CD4-positive, alpha-beta T cell (primary cell): ENCODE measurements at regions of chr9 and their contacts with region 1.

Region 1: GRCh38 chr9:33340186-33340585 is 49.9 kb downstream of the NFX1 start:
- DNase-seq: no peak
- ATAC-seq: no peak
- H3K4me3 ChIP-seq: no peak overlapping the region
- H3K4me3 Mint-ChIP-seq: no peak overlapping the region
- H3K27ac ChIP-seq: no peak overlapping the region
- H3K27ac Mint-ChIP-seq: no peak overlapping the region
- H3K4me1 ChIP-seq: no peaks in the 10 kb centered on the region
- H3K4me1 Mint-ChIP-seq: no peaks in the 10 kb centered on the region
- H3K27me3 ChIP-seq: no peaks in the 10 kb centered on the region
- H3K27me3 Mint-ChIP-seq: no peaks in the 10 kb centered on the region
- CTCF ChIP-seq: no peak

Region 2: DNA sequence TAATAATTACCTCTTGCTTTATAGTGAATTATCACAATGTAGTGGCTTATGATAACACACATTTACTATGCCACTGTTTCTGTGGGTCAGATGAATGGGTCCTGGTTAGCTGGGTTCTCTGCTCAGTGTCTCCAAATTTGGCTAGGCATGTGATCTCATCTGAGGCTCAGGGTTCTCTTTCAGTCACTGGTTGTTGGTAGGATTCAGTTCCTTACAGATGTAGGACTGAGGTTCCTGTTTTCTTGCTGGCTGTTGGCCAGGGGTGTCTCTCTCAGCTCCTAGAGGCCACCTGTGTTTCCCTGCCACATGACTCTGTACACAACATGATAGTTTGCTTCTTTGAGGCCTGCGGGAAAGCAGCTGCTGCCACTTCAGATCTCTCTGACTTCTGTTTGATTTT is 42.8 kb before region 1 on chr9:
- CTCF ChIA-PET with region 1: no interaction called
- POLR2A ChIA-PET with region 1: no interaction called
- intact Hi-C with region 1: loop called in 1 of 2 experiments (anchors 5 kb)
- DNase-seq: peak in 4 of 14 experiments; percentile 8 to 53 (median 36)
- ATAC-seq: peak; percentile 75
- H3K4me3 ChIP-seq: no peak overlapping the region
- H3K4me3 Mint-ChIP-seq: peak overlapping the region; percentile 35
- H3K27ac ChIP-seq: no peak overlapping the region
- H3K27ac Mint-ChIP-seq: peak overlapping the region; percentile 51
- H3K4me1 ChIP-seq: peaks cover 44% of the 10 kb centered on the region
- H3K4me1 Mint-ChIP-seq: peaks cover 81% of the 10 kb centered on the region
- H3K27me3 ChIP-seq: no peaks in the 10 kb centered on the region
- H3K27me3 Mint-ChIP-seq: no peaks in the 10 kb centered on the region
- CTCF ChIP-seq: no peak

Region 3: DNA sequence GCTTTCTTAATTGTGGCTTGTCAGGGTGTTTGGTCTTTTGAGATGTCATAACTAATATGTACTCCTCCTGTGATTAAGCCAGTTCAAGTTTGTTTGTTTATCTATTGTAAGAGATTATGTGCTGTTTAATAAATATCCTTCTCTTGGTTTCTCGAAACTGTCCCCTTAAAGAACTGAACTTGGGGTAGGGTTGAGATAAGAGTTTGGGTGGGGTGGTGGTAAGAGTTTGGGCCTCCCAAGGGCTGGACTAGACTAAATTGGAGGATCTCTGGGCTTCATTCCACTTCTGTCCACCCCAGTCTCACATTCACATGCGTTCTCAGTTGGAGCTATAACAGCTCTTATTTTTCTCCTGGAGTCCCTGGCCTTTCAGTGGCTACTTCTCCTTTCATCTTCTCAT is 23.9 kb after region 1 on chr9:
- CTCF ChIA-PET with region 1: no interaction called
- POLR2A ChIA-PET with region 1: no interaction called
- intact Hi-C with region 1: no loop called
- DNase-seq: no peak
- ATAC-seq: no peak
- H3K4me3 ChIP-seq: no peak overlapping the region
- H3K4me3 Mint-ChIP-seq: no peak overlapping the region
- H3K27ac ChIP-seq: no peak overlapping the region
- H3K27ac Mint-ChIP-seq: no peak overlapping the region
- H3K4me1 ChIP-seq: no peaks in the 10 kb centered on the region
- H3K4me1 Mint-ChIP-seq: no peaks in the 10 kb centered on the region
- H3K27me3 ChIP-seq: no peaks in the 10 kb centered on the region
- H3K27me3 Mint-ChIP-seq: no peaks in the 10 kb centered on the region
- CTCF ChIP-seq: no peak